ENCODE measurements at regions of chr7 and their contacts with region 1.

Region 1: DNA sequence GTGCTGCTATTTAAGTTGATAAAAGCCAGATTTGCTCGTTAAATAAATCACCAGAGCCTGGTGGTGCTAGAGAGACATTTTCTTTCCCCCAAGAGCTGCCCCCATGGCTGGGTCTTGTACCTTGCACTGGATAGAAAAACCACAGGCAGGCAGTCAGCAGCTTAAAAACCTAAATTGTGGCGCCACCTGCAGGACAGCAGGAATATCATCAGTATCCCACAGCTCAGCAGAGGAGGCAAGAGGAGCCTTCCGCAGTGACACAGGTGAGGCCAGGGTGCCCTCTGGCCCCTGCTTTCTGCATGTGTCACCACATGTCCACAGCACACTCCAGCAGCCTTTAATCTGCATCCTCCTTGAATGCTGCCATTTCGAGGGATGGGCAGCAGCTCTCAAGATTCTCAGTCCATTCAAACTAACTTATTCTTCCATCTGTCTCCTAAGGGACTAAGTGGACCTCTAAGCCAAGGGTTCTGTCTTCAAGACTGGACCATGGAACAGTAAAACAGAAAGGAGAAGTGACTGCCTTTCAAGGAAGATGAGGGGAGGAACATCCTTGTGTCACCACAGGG is 4.5 kb upstream of the PLXNA4 start:
- DNase-seq: peak; percentile 78
- H3K4me3 ChIP-seq: no peak overlapping the region
- H3K27ac ChIP-seq: no peak overlapping the region
- H3K4me1 ChIP-seq: peaks cover 7% of the 10 kb centered on the region
- H3K27me3 ChIP-seq: no peaks in the 10 kb centered on the region
- CTCF ChIP-seq: peak; percentile 59 to 76
- POLR2A ChIP-seq: no peak

Region 2: GRCh38 chr7:131688738-131689661 is 891.8 kb before region 1 on chr7:
- CTCF ChIA-PET with region 1: interaction called, 38 read pairs
- POLR2A ChIA-PET with region 1: no interaction called
- dilution Hi-C with region 1: no loop called
- intact Hi-C with region 1: loop called (anchors 1 kb)
- DNase-seq: peak; percentile 61
- H3K4me3 ChIP-seq: no peak overlapping the region
- H3K27ac ChIP-seq: no peak overlapping the region
- H3K4me1 ChIP-seq: no peaks in the 10 kb centered on the region
- H3K27me3 ChIP-seq: peaks cover 0 to 2% of the 10 kb centered on the region in 2 experiments
- CTCF ChIP-seq: peak; percentile 89 to 94
- POLR2A ChIP-seq: no peak

Region 3: GRCh38 chr7:132065193-132065988 is 515.4 kb before region 1 on chr7:
- CTCF ChIA-PET with region 1: interaction called, 3 read pairs
- POLR2A ChIA-PET with region 1: no interaction called
- dilution Hi-C with region 1: no loop called
- intact Hi-C with region 1: loop called (anchors 10 kb)
- DNase-seq: peak; percentile 83
- H3K4me3 ChIP-seq: no peak overlapping the region
- H3K27ac ChIP-seq: peak overlapping the region; percentile 80
- H3K4me1 ChIP-seq: peaks cover 15% of the 10 kb centered on the region
- H3K27me3 ChIP-seq: no peaks in the 10 kb centered on the region
- CTCF ChIP-seq: no peak
- POLR2A ChIP-seq: no peak

Region 4: GRCh38 chr7:132307465-132307864 is 273.3 kb before region 1 on chr7:
- CTCF ChIA-PET with region 1: interaction called, 11 read pairs
- POLR2A ChIA-PET with region 1: no interaction called
- dilution Hi-C with region 1: no loop called
- intact Hi-C with region 1: no loop called
- DNase-seq: peak; percentile 15
- H3K4me3 ChIP-seq: no peak overlapping the region
- H3K27ac ChIP-seq: no peak overlapping the region
- H3K4me1 ChIP-seq: peaks cover 7% of the 10 kb centered on the region
- H3K27me3 ChIP-seq: no peaks in the 10 kb centered on the region
- CTCF ChIP-seq: peak in 1 of 2 donors; percentile 31
- POLR2A ChIP-seq: no peak

Region 5: GRCh38 chr7:132568962-132569361 is 11.8 kb before region 1 on chr7:
- CTCF ChIA-PET with region 1: interaction called, 20 read pairs
- POLR2A ChIA-PET with region 1: no interaction called
- dilution Hi-C with region 1: no loop called
- intact Hi-C with region 1: no loop called
- DNase-seq: no peak
- H3K4me3 ChIP-seq: no peak overlapping the region
- H3K27ac ChIP-seq: no peak overlapping the region
- H3K4me1 ChIP-seq: peaks cover 39% of the 10 kb centered on the region
- H3K27me3 ChIP-seq: no peaks in the 10 kb centered on the region
- CTCF ChIP-seq: no peak
- POLR2A ChIP-seq: no peak

Region 6: DNA sequence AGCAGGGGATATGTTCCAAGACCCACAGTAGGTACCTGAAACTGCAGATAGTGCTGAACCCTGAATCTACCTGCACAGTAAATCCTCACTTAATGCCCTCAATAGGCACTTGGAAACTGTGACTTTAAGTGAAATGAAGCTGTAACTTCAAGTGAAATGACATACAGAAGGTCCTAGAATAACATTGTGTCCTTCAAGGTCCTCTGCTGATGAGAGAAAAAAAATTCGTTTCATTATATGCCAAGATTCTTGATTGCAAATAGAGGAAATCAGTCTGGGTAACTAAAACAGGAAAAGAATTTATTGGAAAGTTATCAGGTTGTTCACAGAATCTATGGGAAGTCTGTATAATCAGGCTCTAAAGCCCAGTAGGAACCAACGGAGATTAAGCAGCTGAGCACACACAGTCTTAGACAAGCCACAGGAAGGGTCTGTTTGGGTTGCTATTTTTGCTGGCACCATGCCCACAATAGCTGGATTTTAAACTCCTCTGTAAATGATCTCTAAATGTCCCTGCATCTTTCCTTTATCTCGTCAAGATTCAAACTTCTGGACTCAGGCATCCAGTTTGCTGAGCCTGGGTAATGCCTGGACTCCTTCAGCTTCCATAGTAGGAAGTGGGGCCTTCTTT is 729.5 kb after region 1 on chr7:
- CTCF ChIA-PET with region 1: no interaction called
- POLR2A ChIA-PET with region 1: no interaction called
- dilution Hi-C with region 1: no loop called
- intact Hi-C with region 1: no loop called
- DNase-seq: peak; percentile 90
- H3K4me3 ChIP-seq: no peak overlapping the region
- H3K27ac ChIP-seq: no peak overlapping the region
- H3K4me1 ChIP-seq: peaks cover 10% of the 10 kb centered on the region
- H3K27me3 ChIP-seq: no peaks in the 10 kb centered on the region
- CTCF ChIP-seq: no peak
- POLR2A ChIP-seq: no peak

Region 7: GRCh38 chr7:133676805-133677370 is 1096.1 kb after region 1 on chr7:
- CTCF ChIA-PET with region 1: no interaction called
- POLR2A ChIA-PET with region 1: no interaction called
- dilution Hi-C with region 1: no loop called
- intact Hi-C with region 1: no loop called
- DNase-seq: peak; percentile 17
- H3K4me3 ChIP-seq: no peak overlapping the region
- H3K27ac ChIP-seq: no peak overlapping the region
- H3K4me1 ChIP-seq: no peaks in the 10 kb centered on the region
- H3K27me3 ChIP-seq: no peaks in the 10 kb centered on the region
- CTCF ChIP-seq: no peak
- POLR2A ChIP-seq: no peak

Measured in endothelial cell of umbilical vein (primary cell).